ENCODE measurements at regions of chr16 and their contacts with region 1.

Region 1: DNA sequence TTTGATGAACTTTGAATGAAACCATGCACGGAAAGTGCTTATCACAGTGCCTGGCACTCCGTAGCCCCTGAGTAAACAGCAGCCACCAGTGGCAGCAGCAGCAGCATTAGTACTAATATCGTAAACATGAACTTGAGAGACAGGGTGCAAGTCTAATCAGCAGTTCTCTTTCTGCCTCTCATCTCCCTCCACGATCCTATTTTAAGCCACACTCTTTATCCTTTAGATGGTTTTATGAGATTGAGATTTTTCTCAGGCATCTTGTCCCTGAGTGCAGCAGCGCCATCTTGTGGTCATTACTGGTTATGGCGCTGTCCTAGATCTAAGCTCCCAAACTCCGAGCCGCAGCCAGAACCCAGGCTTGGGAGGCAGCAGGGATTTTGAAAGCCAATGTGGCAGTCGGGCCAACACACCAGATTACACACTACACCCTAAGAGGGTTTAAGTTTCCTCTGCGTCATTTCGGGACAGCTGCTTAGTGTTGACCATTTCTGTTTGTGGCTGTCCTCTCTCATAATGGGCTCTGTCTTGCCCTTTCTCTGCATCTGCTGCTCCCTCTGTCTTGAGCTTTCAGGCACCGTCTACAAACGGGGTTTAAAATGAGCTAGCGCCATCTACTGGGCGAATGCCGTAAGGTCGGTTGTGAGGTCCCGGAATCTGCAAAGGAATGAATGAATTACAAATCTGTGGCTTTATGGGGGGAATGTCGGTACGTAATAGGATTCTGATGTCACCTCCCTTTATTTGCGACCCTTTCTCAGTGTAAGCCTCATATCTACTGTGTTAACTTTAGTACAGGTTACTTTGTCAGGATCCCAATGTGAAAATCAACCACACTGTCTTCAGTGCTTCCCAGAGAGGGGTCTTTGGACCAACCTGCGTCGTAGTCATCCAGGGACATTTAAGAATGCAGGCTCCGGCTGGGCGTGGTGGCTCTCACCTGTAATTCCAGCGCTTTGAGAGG is 64.5 kb downstream of the CYLD start:
- DNase-seq: peak; percentile 90
- ATAC-seq: peak; percentile 98
- H3K4me3 Mint-ChIP-seq: peak overlapping the region; percentile 72
- H3K27ac Mint-ChIP-seq: peak overlapping the region; percentile 62
- H3K4me1 Mint-ChIP-seq: peaks cover 18% of the 10 kb centered on the region
- H3K27me3 Mint-ChIP-seq: no peaks in the 10 kb centered on the region

Region 2: GRCh38 chr16:50326949-50327402 is 479.4 kb before region 1 on chr16:
- CTCF ChIA-PET with region 1: interaction called, 67 read pairs
- POLR2A ChIA-PET with region 1: interaction called, 3 read pairs
- DNase-seq: peak; percentile 88
- ATAC-seq: peak; percentile 96
- H3K4me3 Mint-ChIP-seq: no peak overlapping the region
- H3K27ac Mint-ChIP-seq: peak overlapping the region; percentile 78
- H3K4me1 Mint-ChIP-seq: peaks cover 62% of the 10 kb centered on the region
- H3K27me3 Mint-ChIP-seq: no peaks in the 10 kb centered on the region

Region 3: GRCh38 chr16:50377001-50377400 is 429.4 kb before region 1 on chr16:
- CTCF ChIA-PET with region 1: interaction called, 14 read pairs
- POLR2A ChIA-PET with region 1: no interaction called
- DNase-seq: no peak
- ATAC-seq: no peak
- H3K4me3 Mint-ChIP-seq: no peak overlapping the region
- H3K27ac Mint-ChIP-seq: no peak overlapping the region
- H3K4me1 Mint-ChIP-seq: no peaks in the 10 kb centered on the region
- H3K27me3 Mint-ChIP-seq: peaks cover 4% of the 10 kb centered on the region

Region 4: DNA sequence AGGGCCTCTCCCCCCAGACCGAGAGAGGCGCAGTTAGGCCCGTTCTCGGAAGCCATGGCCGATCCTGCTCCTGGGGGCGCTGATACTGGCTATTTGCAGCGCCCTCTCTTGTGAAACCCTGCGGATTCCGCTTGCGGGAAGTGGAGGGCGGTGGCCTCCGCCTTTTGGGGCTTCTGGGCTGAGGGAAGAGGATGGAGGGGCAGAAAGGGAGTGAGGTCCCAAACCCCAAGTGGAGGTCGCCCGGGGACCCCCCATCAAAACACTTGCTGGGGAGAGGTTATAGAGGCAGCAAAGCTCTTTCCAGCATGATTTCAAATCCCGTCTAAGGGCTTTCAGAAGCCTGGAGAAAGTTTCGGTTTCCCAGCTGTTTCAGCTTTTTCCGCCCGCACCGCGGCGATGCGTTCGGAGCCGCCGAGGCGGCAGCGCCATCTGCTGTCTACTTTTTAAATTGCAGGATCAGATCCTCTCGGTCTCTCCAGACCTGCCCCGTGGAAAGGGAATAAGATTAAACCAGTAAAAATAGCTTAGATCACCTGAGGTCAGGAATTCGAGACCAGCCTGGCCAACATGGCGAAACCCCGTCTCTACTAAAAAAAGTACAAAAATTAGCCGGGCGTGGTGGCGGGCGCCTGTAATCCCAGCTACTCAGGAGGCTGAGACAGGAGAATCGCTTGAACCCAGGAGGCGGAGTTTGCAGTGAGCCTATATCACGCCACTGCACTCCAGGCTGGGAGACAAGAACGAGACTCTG is 141.1 kb before region 1 on chr16:
- CTCF ChIA-PET with region 1: interaction called, 221 read pairs
- POLR2A ChIA-PET with region 1: interaction called, 11 read pairs
- DNase-seq: peak; percentile 91
- ATAC-seq: peak; percentile 56
- H3K4me3 Mint-ChIP-seq: peak overlapping the region; percentile 64
- H3K27ac Mint-ChIP-seq: peak overlapping the region; percentile 87
- H3K4me1 Mint-ChIP-seq: peaks cover 49% of the 10 kb centered on the region
- H3K27me3 Mint-ChIP-seq: no peaks in the 10 kb centered on the region

Region 5: DNA sequence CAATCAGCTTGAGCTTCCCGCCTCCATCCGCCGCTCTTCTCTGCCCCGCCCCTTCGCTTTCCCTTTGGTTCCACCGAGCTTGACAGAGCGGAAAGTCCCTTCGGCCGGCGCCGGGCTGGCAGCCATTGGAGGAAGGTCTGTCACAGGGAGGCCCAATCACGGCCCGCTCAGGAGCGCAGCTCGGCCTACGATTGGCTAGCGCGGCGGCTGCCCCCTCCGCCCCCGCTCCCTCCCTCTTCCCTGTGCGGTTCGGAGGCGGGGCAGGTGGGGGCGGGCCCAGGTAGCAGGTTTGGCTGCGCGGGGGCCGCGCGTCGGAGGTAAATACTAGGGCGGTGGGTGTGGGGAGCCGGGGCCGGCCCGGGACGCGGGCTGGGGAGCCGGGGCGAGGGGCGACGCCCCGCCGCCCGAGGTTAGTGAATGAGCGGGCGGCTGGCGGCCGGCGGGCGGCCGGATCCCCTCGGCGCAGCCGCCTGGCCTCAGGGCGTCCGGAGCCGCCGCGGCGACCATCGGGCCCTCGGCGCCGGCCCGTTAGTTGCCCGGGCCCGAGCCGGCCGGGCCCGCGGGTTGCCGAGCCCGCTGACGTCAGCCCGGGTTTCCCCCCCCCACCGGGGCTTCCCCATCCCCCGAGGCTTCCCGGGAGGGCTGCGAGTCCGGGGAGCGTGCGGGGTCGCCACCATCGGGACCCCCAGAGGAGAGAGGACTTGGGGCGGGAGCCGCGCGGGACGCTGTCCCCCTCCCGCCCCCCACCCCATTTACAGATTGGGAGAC is 64.4 kb before region 1 on chr16 and contains the start of gene CYLD:
- CTCF ChIA-PET with region 1: interaction called, 62 read pairs
- POLR2A ChIA-PET with region 1: interaction called, 3 read pairs
- DNase-seq: peak; percentile 100
- ATAC-seq: peak; percentile 97
- H3K4me3 Mint-ChIP-seq: peak within 1 kb of the TSS; percentile 91
- H3K27ac Mint-ChIP-seq: peak within 1 kb of the TSS; percentile 97
- H3K4me1 Mint-ChIP-seq: peaks cover 42% of the 10 kb centered on the region
- H3K27me3 Mint-ChIP-seq: no peaks in the 10 kb centered on the region
- total RNA-seq, gene CYLD: 116 to 129 TPM

Region 6: DNA sequence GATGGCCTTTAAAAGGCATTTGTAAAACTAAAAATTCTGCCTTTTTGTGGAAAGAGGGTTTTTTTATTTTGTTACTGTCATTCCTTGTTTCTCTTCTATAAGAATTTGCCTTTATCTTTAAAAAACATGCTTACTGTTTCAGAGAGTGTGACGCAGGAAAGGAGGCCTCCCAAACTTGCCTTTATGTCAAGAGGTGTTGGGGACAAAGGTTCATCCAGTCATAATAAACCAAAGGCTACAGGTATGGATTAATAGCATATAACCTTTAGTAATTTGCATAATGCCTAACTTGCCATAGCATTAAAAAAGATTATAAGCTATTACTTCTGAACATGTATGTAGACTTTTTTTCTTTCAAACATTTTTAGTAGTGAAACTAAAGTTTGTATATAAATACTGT is 30.3 kb before region 1 on chr16:
- CTCF ChIA-PET with region 1: interaction called, 36 read pairs
- POLR2A ChIA-PET with region 1: interaction called, 3 read pairs
- DNase-seq: no peak
- ATAC-seq: no peak
- H3K4me3 Mint-ChIP-seq: no peak overlapping the region
- H3K27ac Mint-ChIP-seq: no peak overlapping the region
- H3K4me1 Mint-ChIP-seq: peaks cover 18% of the 10 kb centered on the region
- H3K27me3 Mint-ChIP-seq: no peaks in the 10 kb centered on the region

Measured in activated CD8-positive, alpha-beta T cell treated with anti-CD3 and anti-CD28 coated beads, Interleukin-2, amount 10 ng/mL, durations not matched to agents 7 days and 5 days (primary cell).